HepG2 (cell line): ENCODE measurements at regions of chr7 and their contacts with region 1.

Region 1: DNA sequence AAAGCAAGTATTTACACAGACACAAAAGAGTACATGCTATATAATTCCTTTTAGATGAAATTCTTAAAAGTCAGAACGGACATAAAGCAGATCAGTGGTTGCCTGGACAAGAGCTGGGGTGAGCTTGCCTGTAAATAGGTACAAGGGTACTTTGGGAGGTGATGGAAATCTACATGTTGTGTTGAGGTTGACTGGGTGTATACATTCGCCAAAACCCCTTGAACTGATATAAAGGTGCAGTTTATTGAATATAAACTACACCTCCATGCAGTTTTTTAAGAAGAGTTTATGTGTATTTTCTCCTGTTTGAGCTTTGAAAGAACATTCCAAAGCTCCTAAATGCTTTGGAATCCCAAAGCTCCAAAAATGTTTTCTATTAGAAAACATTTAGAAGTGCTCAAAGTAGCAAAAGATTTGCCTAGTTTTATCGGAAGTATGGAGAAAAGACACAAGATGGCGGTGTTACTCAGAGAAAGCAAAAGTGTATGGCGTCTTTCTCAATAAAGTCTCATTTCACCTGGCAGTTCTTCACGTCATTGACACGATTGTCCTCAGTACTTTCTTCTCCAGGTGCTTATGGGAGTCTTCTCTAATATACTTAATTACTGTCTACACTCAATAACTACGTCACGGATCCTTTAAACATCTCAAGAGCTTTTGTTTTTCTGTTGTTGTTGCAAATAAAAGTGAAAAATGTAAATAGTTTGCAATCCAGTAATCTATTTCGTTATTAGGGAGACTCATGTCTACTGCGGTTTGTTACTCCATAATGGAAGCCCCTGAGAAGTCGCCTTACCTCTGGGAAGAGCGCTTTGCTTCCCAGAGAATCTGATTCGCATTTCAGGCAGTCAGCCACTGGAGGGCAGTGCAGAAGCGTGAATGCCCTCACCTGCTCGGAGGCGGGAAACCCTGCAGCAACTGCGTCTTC is 14.7 kb upstream of the SEC61G start:
- DNase-seq: peak; percentile 73
- ATAC-seq: peak; percentile 96
- H3K4me3 ChIP-seq: peak overlapping the region in 1 of 3 experiments; percentile 19; a peak in 3 of 6 replicates
- H3K27ac ChIP-seq: no peak overlapping the region
- H3K4me1 ChIP-seq: peaks cover 4% of the 10 kb centered on the region; the same call in 1 of the 2 replicates
- H3K27me3 ChIP-seq: peaks cover 4 to 22% of the 10 kb centered on the region in 2 experiments; a peak in 2 of 5 replicates
- CTCF ChIP-seq: peak; percentile 92
- EP300 ChIP-seq: no peak
- POLR2A ChIP-seq: no peak
- RAD21 ChIP-seq: peak; percentile 84

Region 2: GRCh38 chr7:54697659-54698186 is 76.0 kb before region 1 on chr7:
- CTCF ChIA-PET with region 1: no interaction called
- POLR2A ChIA-PET with region 1: no interaction called
- in situ Hi-C with region 1: no loop called
- intact Hi-C with region 1: no loop called
- DNase-seq: no peak
- ATAC-seq: no peak
- H3K4me3 ChIP-seq: no peak overlapping the region
- H3K27ac ChIP-seq: no peak overlapping the region
- H3K4me1 ChIP-seq: no peaks in the 10 kb centered on the region
- H3K27me3 ChIP-seq: peaks cover 1 to 9% of the 10 kb centered on the region in 2 experiments; a peak in 2 of 5 replicates
- CTCF ChIP-seq: no peak
- EP300 ChIP-seq: no peak
- POLR2A ChIP-seq: no peak
- RAD21 ChIP-seq: no peak

Region 3: GRCh38 chr7:54788664-54789063 is 14.9 kb after region 1 on chr7:
- CTCF ChIA-PET with region 1: no interaction called
- POLR2A ChIA-PET with region 1: no interaction called
- in situ Hi-C with region 1: no loop called
- intact Hi-C with region 1: no loop called
- DNase-seq: peak; percentile 53
- ATAC-seq: peak; percentile 85
- H3K4me3 ChIP-seq: no peak overlapping the region
- H3K27ac ChIP-seq: no peak overlapping the region
- H3K4me1 ChIP-seq: no peaks in the 10 kb centered on the region
- H3K27me3 ChIP-seq: peaks cover 0 to 4% of the 10 kb centered on the region in 2 experiments; a peak in 1 of 5 replicates
- CTCF ChIP-seq: peak; percentile 80
- EP300 ChIP-seq: no peak
- POLR2A ChIP-seq: no peak
- RAD21 ChIP-seq: peak; percentile 46; the same call in 1 of the 2 replicates

Region 4: GRCh38 chr7:54811041-54811845 is 37.5 kb after region 1 on chr7:
- CTCF ChIA-PET with region 1: no interaction called
- POLR2A ChIA-PET with region 1: no interaction called
- in situ Hi-C with region 1: no loop called
- intact Hi-C with region 1: no loop called
- DNase-seq: no peak
- ATAC-seq: no peak
- H3K4me3 ChIP-seq: no peak overlapping the region
- H3K27ac ChIP-seq: no peak overlapping the region
- H3K4me1 ChIP-seq: no peaks in the 10 kb centered on the region
- H3K27me3 ChIP-seq: peaks cover 0 to 3% of the 10 kb centered on the region in 2 experiments; a peak in 1 of 5 replicates
- CTCF ChIP-seq: no peak
- EP300 ChIP-seq: no peak
- POLR2A ChIP-seq: no peak
- RAD21 ChIP-seq: no peak

Region 5: DNA sequence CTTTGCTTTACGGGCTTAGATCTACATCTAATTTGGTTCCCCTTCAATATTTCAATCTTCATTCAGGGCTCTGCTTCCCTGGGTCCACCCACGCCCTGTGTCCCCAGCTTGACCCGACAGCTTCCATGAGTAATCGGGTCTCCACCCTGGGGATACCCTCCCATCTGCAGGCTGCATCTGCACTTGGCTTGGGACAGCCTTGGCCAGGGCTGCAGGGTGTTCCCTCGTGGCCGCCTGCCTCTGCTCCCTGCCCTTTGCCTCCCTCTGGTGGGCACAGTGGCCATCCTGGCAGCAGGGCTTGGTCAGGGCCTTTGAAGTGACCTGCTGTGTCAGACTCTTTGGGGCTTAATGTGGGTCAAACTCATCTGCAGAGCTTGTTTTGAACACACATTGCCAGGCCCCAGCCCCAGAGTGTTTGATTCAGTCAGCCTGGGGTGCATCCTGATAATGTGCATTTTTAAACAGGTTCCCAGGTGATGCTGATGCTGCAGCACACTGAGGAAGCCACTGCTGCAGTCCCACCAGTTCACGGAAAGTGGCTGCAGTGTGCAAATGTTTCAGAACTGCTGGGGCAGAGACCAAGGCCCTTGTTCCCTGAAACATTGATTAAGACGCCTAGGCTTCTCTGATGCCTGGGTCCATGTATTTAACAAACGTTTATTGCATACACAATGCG is 65.9 kb after region 1 on chr7:
- CTCF ChIA-PET with region 1: interaction called, 40 read pairs
- POLR2A ChIA-PET with region 1: no interaction called
- in situ Hi-C with region 1: no loop called
- intact Hi-C with region 1: loop called (anchors 1 kb)
- DNase-seq: peak; percentile 20
- ATAC-seq: peak; percentile 96
- H3K4me3 ChIP-seq: no peak overlapping the region
- H3K27ac ChIP-seq: no peak overlapping the region
- H3K4me1 ChIP-seq: peaks cover 19% of the 10 kb centered on the region
- H3K27me3 ChIP-seq: 0 out of 5 replicates have a peak, but pooled peaks cover 0 to 3% of the 10 kb centered on the region in 2 experiments
- CTCF ChIP-seq: peak; percentile 87
- EP300 ChIP-seq: no peak
- POLR2A ChIP-seq: no peak
- RAD21 ChIP-seq: peak; percentile 60

Region 6: DNA sequence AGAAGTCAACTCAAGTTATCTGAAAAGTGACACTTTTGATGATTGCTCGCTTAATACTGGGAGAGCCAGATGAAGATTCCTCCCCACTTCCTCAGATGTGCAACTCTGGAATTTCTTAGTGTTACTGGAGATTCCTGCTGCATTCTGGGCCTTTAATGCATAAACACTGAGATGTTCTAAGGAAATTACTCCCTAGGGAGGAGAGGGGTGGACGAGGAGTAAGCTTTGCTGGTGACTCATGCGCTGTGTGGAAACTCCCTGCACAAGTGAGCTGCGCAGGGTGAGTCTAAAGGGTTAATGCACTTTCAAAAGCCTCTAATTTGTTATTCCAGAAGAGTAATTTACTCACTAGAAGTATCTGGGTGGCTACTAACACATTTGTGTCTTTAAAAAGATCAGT is 291.3 kb after region 1 on chr7:
- CTCF ChIA-PET with region 1: no interaction called
- POLR2A ChIA-PET with region 1: no interaction called
- in situ Hi-C with region 1: no loop called
- intact Hi-C with region 1: loop called (anchors 5 kb)
- DNase-seq: no peak
- ATAC-seq: no peak
- H3K4me3 ChIP-seq: no peak overlapping the region
- H3K27ac ChIP-seq: peak overlapping the region; percentile 69
- H3K4me1 ChIP-seq: peaks cover 60% of the 10 kb centered on the region
- H3K27me3 ChIP-seq: no peaks in the 10 kb centered on the region
- CTCF ChIP-seq: no peak
- EP300 ChIP-seq: no peak
- POLR2A ChIP-seq: no peak
- RAD21 ChIP-seq: no peak